ENCODE measurements at regions of chr18 and their contacts with region 1.

Region 1: DNA sequence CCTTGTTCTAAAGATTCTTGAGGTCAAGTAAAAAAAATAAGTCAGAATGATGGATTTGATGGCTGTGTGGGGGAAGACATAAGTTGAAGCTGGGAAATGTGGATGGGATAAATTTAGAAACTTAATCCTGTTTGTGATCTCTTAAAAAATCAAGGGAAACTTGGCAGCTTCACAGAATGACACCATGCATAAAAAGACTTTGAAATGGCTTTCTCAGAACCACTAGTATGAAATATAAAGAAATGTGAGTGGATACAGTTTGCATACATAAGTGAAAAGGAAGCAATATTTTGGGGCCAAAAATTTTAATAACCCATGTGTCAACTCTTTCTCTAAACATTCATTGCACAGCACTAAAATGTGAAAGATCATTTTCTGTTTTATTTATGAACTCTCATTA is 21.7 kb downstream of the CDH19 start:
- DNase-seq: no peak
- ATAC-seq: no peak

Region 2: GRCh38 chr18:66533693-66534092 is 48.5 kb before region 1 on chr18:
- intact Hi-C with region 1: loop called (anchors 10 kb)
- DNase-seq: no peak
- ATAC-seq: no peak

Region 3: DNA sequence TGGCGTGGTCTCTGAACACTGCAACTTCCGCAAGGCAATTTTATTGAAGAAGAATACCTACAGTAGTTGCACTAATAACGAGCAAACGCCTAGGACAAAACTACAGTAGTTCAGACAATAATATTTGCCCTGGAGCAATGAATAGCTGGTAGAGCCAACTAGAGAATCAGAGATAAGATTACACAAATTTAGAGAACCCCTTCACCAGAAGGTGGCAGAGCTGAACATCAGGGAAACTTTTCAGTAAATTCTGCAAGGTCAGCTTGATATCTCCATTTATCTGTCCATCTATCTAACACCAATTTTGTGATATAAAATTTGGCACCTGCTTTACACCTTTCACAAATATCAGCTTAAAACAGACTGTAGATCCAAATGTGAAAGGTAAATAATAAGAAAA is 22.1 kb before region 1 on chr18:
- intact Hi-C with region 1: no loop called
- DNase-seq: no peak
- ATAC-seq: no peak

Region 4: DNA sequence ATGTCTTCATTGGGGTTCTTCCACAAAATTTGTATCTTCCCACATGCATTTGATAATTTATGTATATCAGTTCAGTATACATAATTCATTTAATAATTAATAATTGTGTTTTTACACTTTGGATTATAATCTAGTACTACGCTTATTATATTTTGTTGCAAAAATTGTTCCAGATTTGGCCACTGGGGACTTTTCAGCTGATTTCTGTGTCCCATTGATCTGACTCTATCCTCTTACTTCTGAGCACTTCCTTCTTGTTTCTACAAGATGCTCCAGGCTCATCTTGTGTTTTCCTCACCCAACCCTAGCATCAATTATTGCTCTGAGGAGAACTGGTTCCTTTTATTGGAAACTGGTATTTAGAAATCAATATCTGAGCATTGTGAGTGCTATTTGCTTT is 237.0 kb after region 1 on chr18:
- intact Hi-C with region 1: no loop called
- DNase-seq: no peak
- ATAC-seq: no peak

Measured in Right ventricle myocardium inferior (tissue), 1 donor.